Activated CD4-positive, alpha-beta T cell treated with anti-CD3 and anti-CD28 coated beads for 36 hours (primary cell): ENCODE measurements at regions of chr4 and their contacts with region 1.

Region 1: DNA sequence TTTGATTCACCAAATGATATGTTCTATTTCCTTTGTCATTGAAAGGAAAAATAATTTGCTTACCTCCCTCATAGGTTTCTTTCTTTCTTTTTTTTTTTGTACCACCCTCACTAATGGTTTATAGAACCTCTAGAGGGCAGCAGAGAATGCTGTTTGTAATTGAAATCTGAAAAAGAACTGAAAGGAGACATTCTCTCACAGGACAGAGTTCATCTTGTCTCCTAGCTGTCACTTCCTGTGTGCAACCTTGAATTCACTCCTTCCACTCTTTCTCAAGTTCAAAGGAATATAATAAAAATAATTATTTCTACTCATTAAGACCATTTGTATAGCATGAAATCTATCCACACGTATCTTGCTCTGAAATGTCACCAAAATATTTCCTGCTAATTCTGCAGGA is 51.0 kb downstream of the GUCY1B1 start:
- DNase-seq: peak; percentile 19
- ATAC-seq: peak; percentile 85
- H3K4me3 Mint-ChIP-seq: no peak overlapping the region
- H3K27ac Mint-ChIP-seq: no peak overlapping the region
- H3K4me1 Mint-ChIP-seq: no peaks in the 10 kb centered on the region
- H3K27me3 Mint-ChIP-seq: no peaks in the 10 kb centered on the region

Region 2: DNA sequence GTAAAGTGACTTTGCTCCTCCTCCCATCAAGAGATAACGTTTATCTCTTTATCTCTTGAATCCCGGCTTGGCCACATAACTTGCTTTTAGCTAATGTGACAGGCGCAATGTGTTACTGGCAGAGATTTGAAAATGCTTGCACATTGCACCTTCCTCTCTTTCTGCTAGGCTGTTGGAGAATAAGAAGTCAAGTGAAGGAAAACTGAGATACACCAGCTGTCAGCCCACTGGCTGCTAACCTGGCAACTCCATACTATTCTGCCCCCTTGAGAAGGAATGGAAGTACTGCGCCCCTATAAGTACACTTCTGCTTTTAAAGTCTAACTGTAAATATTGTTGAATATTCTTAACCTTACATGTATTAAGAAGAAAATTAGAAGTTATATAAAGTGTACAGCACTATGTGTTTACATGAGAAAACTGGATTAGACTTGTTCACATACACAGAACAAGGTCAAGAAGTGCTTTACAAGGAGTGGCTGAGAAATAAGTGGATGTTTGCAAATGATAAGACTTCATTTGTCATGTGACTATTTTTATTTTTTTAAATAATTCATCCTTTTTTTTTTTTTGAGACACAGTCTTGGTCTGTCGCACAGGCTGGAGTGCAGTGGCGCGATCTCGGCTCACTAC is 568.3 kb after region 1 on chr4:
- CTCF ChIA-PET with region 1: no interaction called
- POLR2A ChIA-PET with region 1: no interaction called
- intact Hi-C with region 1: loop called in 1 of 2 experiments (anchors 5 kb)
- DNase-seq: no peak
- ATAC-seq: no peak
- H3K4me3 Mint-ChIP-seq: no peak overlapping the region
- H3K27ac Mint-ChIP-seq: no peak overlapping the region
- H3K4me1 Mint-ChIP-seq: no peaks in the 10 kb centered on the region
- H3K27me3 Mint-ChIP-seq: no peaks in the 10 kb centered on the region

Region 3: GRCh38 chr4:156968479-156968984 is 1158.7 kb after region 1 on chr4:
- CTCF ChIA-PET with region 1: no interaction called
- POLR2A ChIA-PET with region 1: no interaction called
- intact Hi-C with region 1: loop called in 1 of 2 experiments (anchors 5 kb)
- DNase-seq: peak; percentile 61
- ATAC-seq: peak; percentile 57
- H3K4me3 Mint-ChIP-seq: no peak overlapping the region
- H3K27ac Mint-ChIP-seq: no peak overlapping the region
- H3K4me1 Mint-ChIP-seq: peaks cover 6% of the 10 kb centered on the region
- H3K27me3 Mint-ChIP-seq: peaks cover 48% of the 10 kb centered on the region